Naive thymus-derived CD4-positive, alpha-beta T cell (primary cell): ENCODE measurements at regions of chr17 and their contacts with region 1.

Region 1: DNA sequence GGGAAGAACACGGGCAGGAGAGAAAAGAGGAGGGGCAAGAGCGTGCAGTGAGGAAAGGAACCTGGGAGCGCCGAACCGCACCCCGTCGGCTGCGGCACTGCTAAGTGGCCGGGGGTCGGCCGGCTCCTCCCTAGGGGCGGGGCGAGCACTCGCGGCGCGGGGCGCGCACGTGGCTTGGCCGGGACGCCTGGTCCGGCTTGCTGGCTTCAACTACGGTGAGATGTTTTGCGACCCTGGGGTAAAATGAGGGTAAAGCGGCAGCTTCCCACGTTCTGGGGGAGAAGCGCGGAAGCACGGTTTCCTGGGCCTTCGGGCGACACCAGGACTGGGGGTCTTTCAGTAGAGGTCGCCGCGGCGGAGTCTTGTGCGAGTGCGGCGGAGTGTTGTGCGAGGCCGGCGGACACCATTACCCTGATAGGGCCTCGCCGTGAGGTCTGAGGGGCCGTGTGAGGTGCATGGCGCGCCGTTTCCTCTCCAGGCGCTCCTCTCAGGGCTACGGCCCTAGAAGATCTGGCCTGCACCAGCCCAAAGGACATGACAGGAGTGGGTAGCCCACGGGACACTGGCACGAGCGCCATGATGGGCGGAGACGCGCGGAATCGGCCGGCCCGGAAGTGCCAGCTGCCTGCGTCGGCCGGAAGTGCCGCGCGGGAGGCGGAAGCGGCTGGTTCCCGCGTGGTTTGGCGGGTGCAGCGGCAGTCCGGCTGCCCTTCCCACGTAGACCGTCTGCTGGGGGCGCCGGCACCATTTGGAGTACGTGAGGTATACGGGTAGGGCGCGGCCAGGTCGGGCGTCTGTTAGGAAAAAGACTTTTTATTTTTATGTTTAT is at the starts of genes MYO19 and PIGW:
- DNase-seq: peak; percentile 74 to 90 (median 81)
- ATAC-seq: peak; percentile 88
- H3K4me3 ChIP-seq: peak within 1 kb of the TSS; percentile 100
- H3K4me3 Mint-ChIP-seq: peak within 1 kb of the TSS; percentile 93 to 100 (median 98)
- H3K27ac ChIP-seq: peak within 1 kb of the TSS; percentile 97
- H3K27ac Mint-ChIP-seq: peak within 1 kb of the TSS; percentile 94 to 99 (median 97)
- H3K4me1 ChIP-seq: peaks cover 6% of the 10 kb centered on the region in 2 donors
- H3K4me1 Mint-ChIP-seq: peaks cover 5 to 38% (median 12%) of the 10 kb centered on the region in 7 donors
- H3K27me3 ChIP-seq: no peaks in the 10 kb centered on the region
- H3K27me3 Mint-ChIP-seq: no peaks in the 10 kb centered on the region
- total RNA-seq, gene MYO19: 65.2 to 114 (median 76.9) TPM
- total RNA-seq, gene PIGW: 4.2 to 15.6 (median 5.4) TPM

Region 2: GRCh38 chr17:36486204-36487194 is 48.6 kb before region 1 on chr17 and contains the start of gene ZNHIT3:
- CTCF ChIA-PET with region 1: interaction called, 3 read pairs
- POLR2A ChIA-PET with region 1: interaction called, 12 read pairs
- intact Hi-C with region 1: loop called (anchors 1 kb)
- DNase-seq: peak; percentile 74 to 94 (median 91)
- ATAC-seq: peak; percentile 98
- H3K4me3 ChIP-seq: peak within 1 kb of the TSS; percentile 82
- H3K4me3 Mint-ChIP-seq: peak within 1 kb of the TSS; percentile 87 to 100 (median 100)
- H3K27ac ChIP-seq: peak within 1 kb of the TSS; percentile 86
- H3K27ac Mint-ChIP-seq: peak within 1 kb of the TSS; percentile 94 to 100 (median 99)
- H3K4me1 ChIP-seq: peaks cover 29 to 41% of the 10 kb centered on the region in 2 donors
- H3K4me1 Mint-ChIP-seq: peaks cover 39 to 70% (median 49%) of the 10 kb centered on the region in 7 donors
- H3K27me3 ChIP-seq: no peaks in the 10 kb centered on the region
- H3K27me3 Mint-ChIP-seq: peaks cover 8 to 11% (median 10%) of the 10 kb centered on the region in 5 donors
- total RNA-seq, gene ZNHIT3: 38.4 to 59.9 (median 57.4) TPM

Region 3: DNA sequence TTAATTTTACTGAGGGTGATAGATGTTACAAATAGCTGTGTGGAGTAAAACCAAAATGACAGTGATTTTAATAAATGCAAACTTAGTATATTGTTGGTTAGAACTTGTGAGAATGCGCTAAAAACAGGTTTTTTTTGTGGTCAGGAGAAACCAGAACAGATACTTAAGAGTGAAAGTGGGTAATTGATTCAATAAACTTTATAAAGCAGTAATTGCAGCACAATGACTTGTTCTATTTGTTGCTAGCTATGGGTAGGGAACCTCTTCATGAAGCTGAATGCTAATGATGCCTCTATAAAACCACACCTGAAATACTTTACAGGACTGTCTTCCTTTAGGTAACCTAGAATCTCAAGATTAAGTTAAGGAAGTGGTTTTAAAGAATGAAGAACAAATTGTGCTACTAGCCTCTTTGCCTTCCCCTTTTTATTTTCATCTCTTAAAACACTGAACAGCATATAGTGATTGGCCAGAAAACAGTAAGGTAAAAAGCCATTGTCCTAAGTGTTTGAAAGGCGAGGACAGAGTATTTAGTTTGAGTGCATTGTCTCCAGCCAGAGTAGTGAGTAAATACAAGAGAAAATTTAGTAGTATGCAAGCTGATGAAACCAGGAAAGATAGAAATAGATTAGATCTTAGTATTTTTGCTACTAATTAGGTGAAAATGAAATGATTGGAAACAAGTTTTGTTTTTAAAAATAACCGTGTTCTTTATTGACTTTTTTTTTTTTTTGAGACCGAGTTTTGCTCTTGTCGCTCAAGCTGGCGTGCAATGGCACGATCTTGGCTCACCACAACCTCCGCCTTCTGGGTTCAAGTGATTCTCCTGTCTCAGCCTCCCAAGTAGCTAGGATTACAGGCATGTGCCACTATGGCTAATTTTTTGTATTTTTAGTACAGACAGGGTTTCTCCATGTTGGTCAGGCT is 15.7 kb after region 1 on chr17:
- CTCF ChIA-PET with region 1: interaction called, 6 read pairs
- POLR2A ChIA-PET with region 1: interaction called, 130 read pairs
- intact Hi-C with region 1: loop called in 1 of 2 experiments (anchors 2 kb)
- DNase-seq: peak in 6 of 9 donors; percentile 33 to 75 (median 51)
- ATAC-seq: peak; percentile 58
- H3K4me3 ChIP-seq: no peak overlapping the region
- H3K4me3 Mint-ChIP-seq: peak overlapping the region; percentile 6 to 85 (median 74)
- H3K27ac ChIP-seq: peak overlapping the region; percentile 12
- H3K27ac Mint-ChIP-seq: peak overlapping the region; percentile 33 to 90 (median 72)
- H3K4me1 ChIP-seq: peaks cover 38 to 73% of the 10 kb centered on the region in 2 donors
- H3K4me1 Mint-ChIP-seq: peaks cover 30 to 89% (median 68%) of the 10 kb centered on the region in 7 donors
- H3K27me3 ChIP-seq: no peaks in the 10 kb centered on the region
- H3K27me3 Mint-ChIP-seq: no peaks in the 10 kb centered on the region

Region 4: DNA sequence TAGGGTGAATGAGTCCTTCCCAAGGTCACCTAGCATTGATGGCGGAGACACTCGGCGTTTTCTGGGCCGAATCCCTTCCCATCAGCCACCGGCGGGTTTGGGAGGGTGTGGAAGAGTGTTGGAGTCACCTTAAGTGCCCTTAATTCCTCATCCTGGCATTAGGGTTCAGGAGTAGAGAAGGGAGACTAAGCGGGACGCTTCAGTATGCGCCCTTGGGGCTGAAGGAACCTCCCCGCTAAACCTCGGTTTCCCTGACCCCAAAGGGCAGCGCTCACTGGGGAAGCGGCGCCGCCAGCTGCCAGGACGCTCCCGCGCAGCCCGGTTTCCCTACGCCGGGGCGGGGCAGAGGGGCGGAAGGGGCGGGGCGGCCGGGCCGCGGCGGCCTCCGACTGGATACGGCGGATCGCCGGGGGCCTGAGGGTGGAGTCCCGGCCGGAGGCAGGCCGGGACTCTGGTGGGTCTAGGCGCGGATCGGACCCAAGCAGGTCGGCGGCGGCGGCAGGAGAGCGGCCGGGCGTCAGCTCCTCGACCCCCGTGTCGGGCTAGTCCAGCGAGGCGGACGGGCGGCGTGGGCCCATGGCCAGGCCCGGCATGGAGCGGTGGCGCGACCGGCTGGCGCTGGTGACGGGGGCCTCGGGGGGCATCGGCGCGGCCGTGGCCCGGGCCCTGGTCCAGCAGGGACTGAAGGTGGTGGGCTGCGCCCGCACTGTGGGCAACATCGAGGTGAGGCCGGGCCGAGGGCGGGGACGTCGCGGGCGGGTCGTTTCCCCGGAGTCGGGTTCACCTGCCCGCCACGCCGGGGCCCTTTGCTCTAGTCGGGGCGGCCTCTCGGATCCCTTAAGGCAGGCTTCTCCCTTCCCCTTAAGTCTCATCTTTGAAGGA is 56.6 kb after region 1 on chr17 and contains the start of gene DHRS11:
- CTCF ChIA-PET with region 1: no interaction called
- POLR2A ChIA-PET with region 1: interaction called, 4 read pairs
- intact Hi-C with region 1: loop called in 1 of 2 experiments (anchors 2 kb)
- DNase-seq: peak; percentile 36 to 88 (median 54)
- ATAC-seq: peak; percentile 94
- H3K4me3 ChIP-seq: peak within 1 kb of the TSS; percentile 49
- H3K4me3 Mint-ChIP-seq: peak within 1 kb of the TSS; percentile 63 to 86 (median 82)
- H3K27ac ChIP-seq: peak within 1 kb of the TSS; percentile 81
- H3K27ac Mint-ChIP-seq: peak within 1 kb of the TSS; percentile 49 to 90 (median 81)
- H3K4me1 ChIP-seq: peaks cover 8 to 9% of the 10 kb centered on the region in 2 donors
- H3K4me1 Mint-ChIP-seq: peaks cover 21 to 35% (median 25%) of the 10 kb centered on the region in 7 donors
- H3K27me3 ChIP-seq: no peaks in the 10 kb centered on the region
- H3K27me3 Mint-ChIP-seq: no peaks in the 10 kb centered on the region
- total RNA-seq, gene DHRS11: 1.6 to 10.9 (median 5.1) TPM

Region 5: GRCh38 chr17:36948717-36949460 is 413.8 kb after region 1 on chr17 and contains the start of gene AATF:
- CTCF ChIA-PET with region 1: no interaction called
- POLR2A ChIA-PET with region 1: no interaction called
- intact Hi-C with region 1: loop called in 1 of 2 experiments (anchors 5 kb)
- DNase-seq: peak; percentile 93 to 99 (median 97)
- ATAC-seq: peak; percentile 99
- H3K4me3 ChIP-seq: peak within 1 kb of the TSS; percentile 69
- H3K4me3 Mint-ChIP-seq: peak within 1 kb of the TSS; percentile 91 to 99 (median 95)
- H3K27ac ChIP-seq: peak within 1 kb of the TSS; percentile 85
- H3K27ac Mint-ChIP-seq: peak within 1 kb of the TSS; percentile 91 to 97 (median 94)
- H3K4me1 ChIP-seq: peaks cover 21 to 33% of the 10 kb centered on the region in 2 donors
- H3K4me1 Mint-ChIP-seq: peaks cover 43 to 60% (median 51%) of the 10 kb centered on the region in 7 donors
- H3K27me3 ChIP-seq: peaks cover 7 to 18% of the 10 kb centered on the region in 2 donors
- H3K27me3 Mint-ChIP-seq: peaks cover 26 to 45% (median 34%) of the 10 kb centered on the region in 5 donors
- total RNA-seq, gene AATF: 39.7 to 70.8 (median 58.7) TPM